Head of caudate nucleus (tissue), 42 donors: ENCODE measurements at regions of chr19 and their contacts with region 1.

Region 1: GRCh38 chr19:49210108-49210900 is 52.7 kb downstream of the TRPM4 start:
- DNase-seq: peak in 36 of 42 donors; percentile 7 to 63 (median 30)

Region 2: GRCh38 chr19:49106648-49107135 is 103.6 kb before region 1 on chr19:
- intact Hi-C with region 1: loop called (anchors 10 kb)
- DNase-seq: peak; percentile 38 to 86 (median 70)

Region 3: GRCh38 chr19:49224856-49225255 is 14.6 kb after region 1 on chr19:
- intact Hi-C with region 1: no loop called
- DNase-seq: peak in 40 of 42 donors; percentile 11 to 79 (median 46)